ENCODE measurements at regions of chr20 and their contacts with region 1.

Region 1: GRCh38 chr20:31485450-31486339 is 10.6 kb downstream of the REM1 start:
- DNase-seq: no peak
- ATAC-seq: no peak
- H3K4me3 ChIP-seq: no peak overlapping the region
- H3K27ac ChIP-seq: no peak overlapping the region
- H3K4me1 ChIP-seq: no peaks in the 10 kb centered on the region
- CTCF ChIP-seq: no peak
- EP300 ChIP-seq: no peak
- POLR2A ChIP-seq: no peak
- RAD21 ChIP-seq: no peak

Region 2: GRCh38 chr20:31452575-31452974 is 33.1 kb before region 1 on chr20:
- CTCF ChIA-PET with region 1: interaction called, 11 read pairs
- POLR2A ChIA-PET with region 1: no interaction called
- DNase-seq: no peak
- ATAC-seq: no peak
- H3K4me3 ChIP-seq: no peak overlapping the region
- H3K27ac ChIP-seq: no peak overlapping the region
- H3K4me1 ChIP-seq: no peaks in the 10 kb centered on the region
- CTCF ChIP-seq: no peak
- EP300 ChIP-seq: no peak
- POLR2A ChIP-seq: no peak
- RAD21 ChIP-seq: no peak